Common myeloid progenitor, CD34-positive (primary cell): ENCODE measurements at regions of chr2 and their contacts with region 1.

Region 1: GRCh38 chr2:100592226-100592625 is 29.4 kb downstream of the PDCL3 start:
- DNase-seq: no peak
- H3K4me3 ChIP-seq: no peak overlapping the region
- H3K27ac ChIP-seq: no peak overlapping the region
- H3K4me1 ChIP-seq: no peaks in the 10 kb centered on the region
- H3K27me3 ChIP-seq: no peaks in the 10 kb centered on the region

Region 2: DNA sequence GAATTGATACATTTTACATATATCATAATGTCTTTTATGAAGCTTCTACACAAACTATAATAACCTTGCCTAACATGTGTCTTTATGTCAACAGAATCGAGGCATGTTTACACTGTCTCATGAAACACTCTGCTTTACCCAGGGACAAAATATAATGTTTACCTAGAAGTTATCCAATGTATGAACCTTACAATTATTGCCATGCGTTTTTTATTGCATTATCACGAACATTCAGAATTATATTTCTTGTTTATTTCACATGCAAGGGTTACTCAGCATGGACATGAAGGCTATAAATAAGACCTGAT is 289.7 kb before region 1 on chr2:
- CTCF ChIA-PET with region 1: no interaction called
- POLR2A ChIA-PET with region 1: no interaction called
- DNase-seq: no peak
- H3K4me3 ChIP-seq: no peak overlapping the region
- H3K27ac ChIP-seq: no peak overlapping the region
- H3K4me1 ChIP-seq: no peaks in the 10 kb centered on the region
- H3K27me3 ChIP-seq: peaks cover 0 to 2% (median 0%) of the 10 kb centered on the region in 5 experiments

Region 3: DNA sequence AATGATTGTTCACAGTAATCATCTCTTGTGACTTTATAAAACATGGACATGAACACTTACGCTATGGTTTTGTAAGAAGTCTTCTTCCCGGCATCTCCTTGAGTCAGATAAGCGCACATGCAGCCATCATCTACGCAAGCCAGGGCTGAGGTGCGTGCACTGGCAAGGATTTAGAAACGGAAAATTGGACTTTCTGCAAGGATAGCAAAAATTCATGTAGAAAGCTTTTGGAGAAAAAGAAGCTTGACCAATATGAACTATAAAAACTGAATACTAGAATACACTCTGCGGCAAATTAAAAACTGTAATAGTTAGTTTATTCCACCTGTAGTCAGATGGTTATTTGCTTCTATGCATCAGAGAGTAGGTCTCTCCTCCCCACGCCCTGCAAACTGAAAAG is 115.6 kb before region 1 on chr2:
- CTCF ChIA-PET with region 1: no interaction called
- POLR2A ChIA-PET with region 1: no interaction called
- DNase-seq: no peak
- H3K4me3 ChIP-seq: no peak overlapping the region
- H3K27ac ChIP-seq: no peak overlapping the region
- H3K4me1 ChIP-seq: no peaks in the 10 kb centered on the region
- H3K27me3 ChIP-seq: peaks cover 0 to 4% (median 0%) of the 10 kb centered on the region in 5 experiments

Region 4: GRCh38 chr2:100580367-100581276 is 11.6 kb before region 1 on chr2:
- CTCF ChIA-PET with region 1: interaction called, 39 read pairs
- POLR2A ChIA-PET with region 1: no interaction called
- DNase-seq: peak; percentile 74 to 87 (median 76)
- H3K4me3 ChIP-seq: peak overlapping the region in 2 of 7 experiments; percentile 41 to 63
- H3K27ac ChIP-seq: peak overlapping the region; percentile 83 to 92
- H3K4me1 ChIP-seq: peaks cover 9 to 20% (median 18%) of the 10 kb centered on the region in 4 experiments
- H3K27me3 ChIP-seq: no peaks in the 10 kb centered on the region

Region 5: GRCh38 chr2:100610381-100610831 is 18.2 kb after region 1 on chr2:
- CTCF ChIA-PET with region 1: interaction called, 26 read pairs
- POLR2A ChIA-PET with region 1: no interaction called
- DNase-seq: peak; percentile 48 to 68 (median 65)
- H3K4me3 ChIP-seq: no peak overlapping the region
- H3K27ac ChIP-seq: no peak overlapping the region
- H3K4me1 ChIP-seq: no peaks in the 10 kb centered on the region
- H3K27me3 ChIP-seq: no peaks in the 10 kb centered on the region

Region 6: GRCh38 chr2:100640431-100641124 is 48.4 kb after region 1 on chr2:
- CTCF ChIA-PET with region 1: no interaction called
- POLR2A ChIA-PET with region 1: no interaction called
- DNase-seq: no peak
- H3K4me3 ChIP-seq: no peak overlapping the region
- H3K27ac ChIP-seq: no peak overlapping the region
- H3K4me1 ChIP-seq: peaks cover 0 to 11% (median 5%) of the 10 kb centered on the region in 4 experiments
- H3K27me3 ChIP-seq: peaks cover 0 to 9% (median 0%) of the 10 kb centered on the region in 5 experiments

Region 7: GRCh38 chr2:100984892-100985379 is 392.7 kb after region 1 on chr2:
- CTCF ChIA-PET with region 1: interaction called, 13 read pairs
- POLR2A ChIA-PET with region 1: no interaction called
- DNase-seq: peak; percentile 78 to 85 (median 79)
- H3K4me3 ChIP-seq: no peak overlapping the region
- H3K27ac ChIP-seq: no peak overlapping the region
- H3K4me1 ChIP-seq: no peaks in the 10 kb centered on the region
- H3K27me3 ChIP-seq: no peaks in the 10 kb centered on the region